ENCODE measurements at regions of chrX and their contacts with region 1.

Region 1: GRCh38 chrX:56802921-56803849 is 74.1 kb downstream of the NBDY start:
- DNase-seq: peak; percentile 22 to 84 (median 61)
- ATAC-seq: no peak
- H3K4me3 ChIP-seq: no peak overlapping the region
- H3K4me3 Mint-ChIP-seq: peak overlapping the region in 8 of 10 donors; percentile 21 to 97 (median 92)
- H3K27ac ChIP-seq: peak overlapping the region; percentile 52
- H3K27ac Mint-ChIP-seq: peak overlapping the region; percentile 18 to 96 (median 73)
- H3K4me1 ChIP-seq: peaks cover 21 to 26% of the 10 kb centered on the region in 2 donors
- H3K4me1 Mint-ChIP-seq: peaks cover 27 to 64% (median 44%) of the 10 kb centered on the region in 7 donors
- H3K27me3 ChIP-seq: no peaks in the 10 kb centered on the region
- H3K27me3 Mint-ChIP-seq: no peaks in the 10 kb centered on the region

Region 2: GRCh38 chrX:56281789-56282188 is 521.4 kb before region 1 on chrX:
- CTCF ChIA-PET with region 1: no interaction called
- POLR2A ChIA-PET with region 1: no interaction called
- intact Hi-C with region 1: loop called in 1 of 2 experiments (anchors 1 kb)
- DNase-seq: peak in 7 of 9 donors; percentile 15 to 60 (median 46)
- ATAC-seq: peak; percentile 55
- H3K4me3 ChIP-seq: no peak overlapping the region
- H3K4me3 Mint-ChIP-seq: peak overlapping the region in 3 of 10 donors; percentile 3 to 41 (median 14)
- H3K27ac ChIP-seq: no peak overlapping the region
- H3K27ac Mint-ChIP-seq: peak overlapping the region in 2 of 9 donors; percentile 40 to 70
- H3K4me1 ChIP-seq: peaks cover 0 to 3% of the 10 kb centered on the region in 2 donors
- H3K4me1 Mint-ChIP-seq: peaks cover 2 to 14% (median 10%) of the 10 kb centered on the region in 7 donors
- H3K27me3 ChIP-seq: no peaks in the 10 kb centered on the region
- H3K27me3 Mint-ChIP-seq: no peaks in the 10 kb centered on the region

Region 3: DNA sequence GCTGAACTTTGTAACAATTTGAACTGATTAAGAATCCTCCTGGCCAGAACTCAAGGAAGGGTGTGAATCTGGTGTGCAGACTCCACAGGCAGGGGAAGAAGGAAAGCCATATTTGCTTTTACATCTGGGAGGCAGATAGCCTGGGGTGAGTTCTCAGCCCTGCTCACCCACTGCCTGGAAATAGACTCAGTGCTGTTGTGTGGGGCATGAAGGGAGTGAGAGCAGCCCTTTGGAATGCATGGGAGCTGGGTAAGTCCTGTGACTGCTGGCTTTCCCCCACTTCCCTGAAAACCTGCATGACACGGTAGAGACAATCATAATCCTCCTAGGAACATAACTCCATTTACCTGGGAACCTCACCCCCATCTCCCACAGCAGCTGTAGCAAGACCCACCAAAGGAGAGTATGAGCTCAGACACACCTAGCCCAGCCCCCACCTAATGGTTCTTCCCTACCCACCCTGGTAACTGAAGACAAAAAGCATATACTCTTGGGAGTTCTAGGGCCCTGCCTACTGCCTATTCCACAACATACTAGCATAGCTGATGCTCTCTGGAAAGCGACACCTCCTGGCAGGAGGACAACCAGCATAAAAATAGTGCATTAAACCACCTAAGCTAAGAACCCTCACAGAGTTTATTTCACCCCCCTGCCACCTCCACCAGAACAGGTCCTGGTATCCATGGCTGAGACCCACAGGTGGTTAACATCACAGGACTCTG is 299.1 kb before region 1 on chrX:
- CTCF ChIA-PET with region 1: no interaction called
- POLR2A ChIA-PET with region 1: no interaction called
- intact Hi-C with region 1: no loop called
- DNase-seq: no peak
- ATAC-seq: no peak
- H3K4me3 ChIP-seq: no peak overlapping the region
- H3K4me3 Mint-ChIP-seq: peak overlapping the region in 1 of 10 donors; percentile 17
- H3K27ac ChIP-seq: no peak overlapping the region
- H3K27ac Mint-ChIP-seq: no peak overlapping the region
- H3K4me1 ChIP-seq: no peaks in the 10 kb centered on the region
- H3K4me1 Mint-ChIP-seq: peaks cover 0 to 4% (median 0%) of the 10 kb centered on the region in 7 donors
- H3K27me3 ChIP-seq: no peaks in the 10 kb centered on the region
- H3K27me3 Mint-ChIP-seq: peaks cover 0 to 2% (median 0%) of the 10 kb centered on the region in 5 donors

Region 4: DNA sequence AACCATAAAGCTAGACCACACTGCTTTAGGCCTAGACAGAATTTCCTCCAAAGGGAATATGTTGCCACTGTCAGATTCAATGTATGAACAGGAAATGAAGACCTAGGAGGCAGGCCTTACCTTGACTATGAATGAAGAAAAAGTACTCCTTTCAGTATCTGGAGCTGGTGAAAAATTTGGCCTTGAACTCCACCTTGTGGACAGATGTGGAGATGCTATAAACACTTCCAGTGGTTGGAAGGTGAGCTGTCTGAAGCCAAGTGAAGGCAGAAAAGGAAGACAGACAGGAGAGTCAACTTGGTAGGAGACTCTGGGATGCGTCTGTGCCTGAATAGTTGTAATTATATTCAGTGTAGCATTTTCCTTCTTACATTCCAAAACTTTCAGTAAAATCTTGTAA is 175.0 kb after region 1 on chrX:
- CTCF ChIA-PET with region 1: interaction called, 3 read pairs
- POLR2A ChIA-PET with region 1: no interaction called
- intact Hi-C with region 1: loop called (anchors 1 kb)
- DNase-seq: peak in 8 of 9 donors; percentile 19 to 72 (median 56)
- ATAC-seq: peak; percentile 72
- H3K4me3 ChIP-seq: no peak overlapping the region
- H3K4me3 Mint-ChIP-seq: no peak overlapping the region
- H3K27ac ChIP-seq: no peak overlapping the region
- H3K27ac Mint-ChIP-seq: peak overlapping the region in 5 of 9 donors; percentile 4 to 75 (median 27)
- H3K4me1 ChIP-seq: no peaks in the 10 kb centered on the region
- H3K4me1 Mint-ChIP-seq: peaks cover 0 to 6% (median 0%) of the 10 kb centered on the region in 7 donors
- H3K27me3 ChIP-seq: no peaks in the 10 kb centered on the region
- H3K27me3 Mint-ChIP-seq: no peaks in the 10 kb centered on the region

Region 5: DNA sequence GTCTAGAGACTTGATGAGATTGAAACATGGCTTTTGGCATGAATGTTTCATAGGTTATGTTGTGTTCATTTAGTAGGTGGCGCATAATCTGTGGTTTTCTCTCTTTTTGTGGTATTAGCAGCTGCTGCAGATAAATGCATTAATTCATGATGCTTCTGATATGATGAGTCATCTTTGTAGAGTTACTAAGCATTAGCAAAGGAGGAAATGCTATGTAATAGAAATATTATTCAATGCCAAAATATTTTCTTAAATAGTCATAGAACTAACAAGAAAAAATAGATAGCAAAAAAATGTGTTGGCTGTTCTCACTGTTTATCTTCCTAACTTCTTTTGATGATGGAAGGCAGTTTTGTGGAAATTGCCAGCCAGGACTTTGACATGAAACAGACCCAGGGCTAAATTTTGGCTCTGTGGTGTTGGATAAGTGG is 792.2 kb after region 1 on chrX:
- CTCF ChIA-PET with region 1: no interaction called
- POLR2A ChIA-PET with region 1: no interaction called
- intact Hi-C with region 1: loop called in 1 of 2 experiments (anchors 10 kb)
- DNase-seq: no peak
- ATAC-seq: no peak
- H3K4me3 ChIP-seq: no peak overlapping the region
- H3K4me3 Mint-ChIP-seq: peak overlapping the region; percentile 6 to 87 (median 68)
- H3K27ac ChIP-seq: no peak overlapping the region
- H3K27ac Mint-ChIP-seq: peak overlapping the region in 5 of 9 donors; percentile 0 to 79 (median 50)
- H3K4me1 ChIP-seq: peaks cover 0 to 18% of the 10 kb centered on the region in 2 donors
- H3K4me1 Mint-ChIP-seq: peaks cover 8 to 54% (median 39%) of the 10 kb centered on the region in 7 donors
- H3K27me3 ChIP-seq: no peaks in the 10 kb centered on the region
- H3K27me3 Mint-ChIP-seq: no peaks in the 10 kb centered on the region

Region 6: GRCh38 chrX:58025979-58026378 is 1222.8 kb after region 1 on chrX:
- CTCF ChIA-PET with region 1: no interaction called
- POLR2A ChIA-PET with region 1: no interaction called
- intact Hi-C with region 1: loop called in 1 of 2 experiments (anchors 10 kb)
- DNase-seq: peak in 6 of 9 donors; percentile 4 to 43 (median 30)
- ATAC-seq: no peak
- H3K4me3 ChIP-seq: no peak overlapping the region
- H3K4me3 Mint-ChIP-seq: no peak overlapping the region
- H3K27ac ChIP-seq: no peak overlapping the region
- H3K27ac Mint-ChIP-seq: no peak overlapping the region
- H3K4me1 ChIP-seq: peaks cover 0 to 7% of the 10 kb centered on the region in 2 donors
- H3K4me1 Mint-ChIP-seq: peaks cover 0 to 34% (median 8%) of the 10 kb centered on the region in 7 donors
- H3K27me3 ChIP-seq: no peaks in the 10 kb centered on the region
- H3K27me3 Mint-ChIP-seq: no peaks in the 10 kb centered on the region